Activated T-helper 1 cell treated with anti-CD3 and anti-CD28 coated beads, Interleukin-12 subunit alpha, Interleukin-12 subunit beta, Interleukin-2, Interleukin-4 antibody, amounts not matched to agents 30 ng/mL and 10 ng/mL and 1 ng/mL, durations not matched to agents 14 hours and 24 hours and 36 hours (primary cell): ENCODE measurements at regions of chr10 and their contacts with region 1.

Region 1: DNA sequence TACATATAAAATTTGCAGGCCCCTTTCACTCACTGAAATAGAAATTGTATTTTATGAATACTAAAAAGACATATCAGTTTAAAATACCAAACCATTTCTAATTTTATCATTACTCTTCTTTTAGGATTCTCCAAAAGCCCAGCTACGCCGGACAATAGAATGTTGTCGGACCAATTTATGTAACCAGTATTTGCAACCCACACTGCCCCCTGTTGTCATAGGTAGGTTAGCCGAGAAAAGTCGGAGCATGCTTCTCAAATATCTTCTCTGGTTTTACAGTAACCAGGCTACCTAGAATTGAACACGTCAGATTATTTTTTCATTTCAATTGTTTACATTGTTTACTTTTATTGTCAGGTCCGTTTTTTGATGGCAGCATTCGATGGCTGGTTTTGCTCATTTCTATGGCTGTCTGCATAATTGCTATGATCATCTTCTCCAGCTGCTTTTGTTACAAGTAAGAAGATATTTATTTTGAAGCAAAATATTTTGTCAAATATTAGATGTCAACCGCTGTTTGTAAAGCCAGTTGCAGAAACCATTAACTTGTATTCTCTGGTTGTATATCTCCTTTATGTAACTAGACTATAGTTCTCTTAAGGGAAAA is 57.6 kb downstream of the MMRN2 start:
- DNase-seq: peak; percentile 10
- H3K4me3 Mint-ChIP-seq: no peak overlapping the region
- H3K27ac Mint-ChIP-seq: no peak overlapping the region
- H3K4me1 Mint-ChIP-seq: no peaks in the 10 kb centered on the region
- H3K27me3 Mint-ChIP-seq: no peaks in the 10 kb centered on the region

Region 2: DNA sequence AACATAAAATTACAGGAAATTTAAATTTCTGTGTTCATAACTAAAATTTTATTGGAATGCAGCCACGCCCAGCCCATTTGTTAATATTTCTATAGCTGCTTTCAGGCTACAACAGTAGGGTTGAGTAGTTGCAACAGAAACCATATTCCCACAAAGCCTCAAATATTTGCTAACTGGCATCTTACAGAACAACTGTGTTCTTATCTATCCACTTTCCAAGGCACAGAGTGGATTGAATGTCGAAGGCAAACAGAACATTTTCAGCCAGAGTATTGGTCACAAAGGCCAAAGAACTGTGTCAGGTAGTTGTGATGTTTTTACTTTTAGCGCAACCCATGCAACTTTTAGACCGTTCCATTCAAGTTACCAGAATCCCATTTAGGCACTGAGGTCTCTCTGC is 296.5 kb before region 1 on chr10:
- intact Hi-C with region 1: no loop called
- DNase-seq: no peak
- H3K4me3 Mint-ChIP-seq: no peak overlapping the region
- H3K27ac Mint-ChIP-seq: no peak overlapping the region
- H3K4me1 Mint-ChIP-seq: no peaks in the 10 kb centered on the region
- H3K27me3 Mint-ChIP-seq: peaks cover 19% of the 10 kb centered on the region

Region 3: GRCh38 chr10:86688398-86688921 is 211.3 kb before region 1 on chr10:
- intact Hi-C with region 1: loop called (anchors 1 kb)
- DNase-seq: peak; percentile 28
- H3K4me3 Mint-ChIP-seq: no peak overlapping the region
- H3K27ac Mint-ChIP-seq: no peak overlapping the region
- H3K4me1 Mint-ChIP-seq: no peaks in the 10 kb centered on the region
- H3K27me3 Mint-ChIP-seq: peaks cover 9% of the 10 kb centered on the region

Region 4: DNA sequence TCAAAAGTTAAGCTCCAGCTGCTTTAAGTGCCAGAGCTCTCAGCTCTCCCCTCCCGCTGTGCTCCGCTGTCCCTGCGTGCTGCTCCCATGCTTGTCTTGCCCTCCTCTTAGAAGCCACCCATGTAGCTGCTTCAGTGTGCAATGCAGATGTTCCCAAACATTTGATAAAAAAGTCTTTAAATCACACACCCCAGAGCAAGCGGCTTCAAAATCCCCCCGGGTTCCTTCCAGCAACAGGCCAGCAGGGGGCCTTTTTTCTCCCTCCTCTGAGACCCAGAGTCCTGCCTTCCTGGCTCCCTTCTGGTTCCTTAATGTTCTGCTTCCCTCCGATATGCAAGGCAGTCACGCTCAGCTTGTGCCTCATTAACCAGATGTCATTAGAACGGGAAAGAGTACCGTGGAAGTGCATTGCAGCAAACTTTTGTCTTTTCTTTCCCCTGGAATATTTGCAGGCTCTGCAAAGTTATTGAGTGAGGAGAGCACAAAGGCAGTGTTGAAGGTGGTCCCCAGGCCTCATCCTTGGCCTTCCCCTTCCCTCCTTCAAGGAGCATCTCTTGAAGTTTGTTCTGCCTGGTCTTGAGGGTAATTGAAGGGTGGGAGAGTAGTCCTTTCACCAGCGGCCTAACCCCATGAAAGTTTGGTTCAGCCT is 205.9 kb before region 1 on chr10:
- intact Hi-C with region 1: loop called (anchors 1 kb)
- DNase-seq: peak; percentile 5
- H3K4me3 Mint-ChIP-seq: no peak overlapping the region
- H3K27ac Mint-ChIP-seq: no peak overlapping the region
- H3K4me1 Mint-ChIP-seq: no peaks in the 10 kb centered on the region
- H3K27me3 Mint-ChIP-seq: peaks cover 16% of the 10 kb centered on the region

Region 5: GRCh38 chr10:86876748-86877147 is 23.0 kb before region 1 on chr10:
- intact Hi-C with region 1: no loop called
- DNase-seq: no peak
- H3K4me3 Mint-ChIP-seq: no peak overlapping the region
- H3K27ac Mint-ChIP-seq: no peak overlapping the region
- H3K4me1 Mint-ChIP-seq: no peaks in the 10 kb centered on the region
- H3K27me3 Mint-ChIP-seq: peaks cover 1% of the 10 kb centered on the region